ENCODE measurements at regions of chr4 and their contacts with region 1.

Region 1: DNA sequence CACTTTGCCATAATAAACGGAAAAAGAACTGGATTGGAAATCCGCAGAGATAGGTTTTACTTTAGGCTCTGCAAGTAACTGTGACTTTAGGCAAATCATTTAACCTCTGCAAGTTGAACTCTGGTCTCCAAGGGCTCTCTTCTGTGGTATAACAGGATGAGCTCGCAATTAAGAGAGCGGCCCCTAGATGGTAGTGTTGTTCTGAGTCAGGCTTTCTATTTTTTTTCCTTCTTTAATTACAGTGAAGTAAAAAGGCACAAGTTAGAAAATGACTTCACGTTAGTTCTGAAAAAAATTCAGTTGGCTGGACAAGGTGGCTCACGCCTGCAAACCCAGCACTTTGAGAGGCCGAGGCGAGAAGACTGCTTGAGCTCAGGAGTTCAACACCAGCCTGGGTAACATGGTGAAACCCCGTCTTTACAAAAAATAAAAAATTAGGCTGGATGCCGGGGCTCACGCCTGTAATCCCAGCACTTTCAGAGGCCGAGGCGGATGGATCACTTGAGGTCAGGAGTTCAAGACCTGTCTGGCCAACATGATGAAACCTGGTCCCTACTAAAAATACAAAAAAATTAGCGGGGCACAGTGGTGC is 18.0 kb downstream of the RPS3A start:
- DNase-seq: peak; percentile 37
- ATAC-seq: peak; percentile 87
- H3K4me3 ChIP-seq: no peak overlapping the region
- H3K27ac ChIP-seq: no peak overlapping the region
- H3K4me1 ChIP-seq: no peaks in the 10 kb centered on the region
- H3K27me3 ChIP-seq: no peaks in the 10 kb centered on the region
- CTCF ChIP-seq: peak; percentile 69 to 82 (median 73); a peak in 5 of 6 replicates
- POLR2A ChIP-seq: no peak
- RAD21 ChIP-seq: peak; percentile 90

Region 2: GRCh38 chr4:151091081-151091480 is 26.4 kb before region 1 on chr4:
- CTCF ChIA-PET with region 1: no interaction called
- POLR2A ChIA-PET with region 1: no interaction called
- RAD21 ChIA-PET with region 1: no interaction called
- intact Hi-C with region 1: no loop called
- DNase-seq: no peak
- ATAC-seq: no peak
- H3K4me3 ChIP-seq: no peak overlapping the region
- H3K27ac ChIP-seq: no peak overlapping the region
- H3K4me1 ChIP-seq: no peaks in the 10 kb centered on the region
- H3K27me3 ChIP-seq: no peaks in the 10 kb centered on the region
- CTCF ChIP-seq: no peak
- POLR2A ChIP-seq: no peak
- RAD21 ChIP-seq: no peak

Region 3: GRCh38 chr4:151362404-151363164 is 245.1 kb after region 1 on chr4:
- CTCF ChIA-PET with region 1: interaction called, 8 read pairs
- POLR2A ChIA-PET with region 1: no interaction called
- RAD21 ChIA-PET with region 1: interaction called, 3 read pairs
- intact Hi-C with region 1: loop called (anchors 1 kb)
- DNase-seq: peak; percentile 76
- ATAC-seq: peak; percentile 99
- H3K4me3 ChIP-seq: no peak overlapping the region
- H3K27ac ChIP-seq: no peak overlapping the region
- H3K4me1 ChIP-seq: peaks cover 0 to 8% of the 10 kb centered on the region in 2 experiments; a peak in 2 of 4 replicates
- H3K27me3 ChIP-seq: no peaks in the 10 kb centered on the region
- CTCF ChIP-seq: peak; percentile 92 to 99 (median 98)
- POLR2A ChIP-seq: no peak
- RAD21 ChIP-seq: peak; percentile 98

Region 4: DNA sequence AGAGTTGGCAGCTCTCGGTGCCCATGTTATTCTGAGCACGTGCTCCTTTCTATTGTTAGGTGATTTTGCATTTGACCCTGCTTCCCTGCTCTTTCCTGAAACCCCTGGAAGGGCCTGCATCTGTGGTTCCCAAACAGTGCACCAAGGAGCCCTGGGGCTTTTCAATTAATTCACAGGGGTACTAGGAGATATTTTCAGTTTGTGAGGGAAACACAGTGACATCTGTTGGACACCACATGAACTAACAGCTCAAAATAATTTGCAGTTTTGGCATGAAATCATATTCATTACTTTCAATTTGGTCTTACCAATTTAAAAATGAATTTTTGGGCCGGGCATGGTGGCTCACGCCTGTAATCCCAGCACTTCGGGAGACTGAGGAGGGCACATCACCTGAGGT is 486.8 kb after region 1 on chr4:
- CTCF ChIA-PET with region 1: interaction called, 16 read pairs
- POLR2A ChIA-PET with region 1: no interaction called
- RAD21 ChIA-PET with region 1: no interaction called
- intact Hi-C with region 1: loop called (anchors 2 kb)
- DNase-seq: no peak
- ATAC-seq: peak; percentile 70
- H3K4me3 ChIP-seq: no peak overlapping the region
- H3K27ac ChIP-seq: no peak overlapping the region
- H3K4me1 ChIP-seq: peaks cover 0 to 3% of the 10 kb centered on the region in 2 experiments; a peak in 1 of 4 replicates
- H3K27me3 ChIP-seq: no peaks in the 10 kb centered on the region
- CTCF ChIP-seq: peak; percentile 40 to 62 (median 45); a peak in 4 of 6 replicates
- POLR2A ChIP-seq: no peak
- RAD21 ChIP-seq: peak; percentile 57; the same call in 1 of the 2 replicates

Region 5: GRCh38 chr4:151613290-151613689 is 495.8 kb after region 1 on chr4:
- CTCF ChIA-PET with region 1: interaction called, 4 read pairs
- POLR2A ChIA-PET with region 1: no interaction called
- RAD21 ChIA-PET with region 1: no interaction called
- intact Hi-C with region 1: loop called (anchors 2 kb)
- DNase-seq: no peak
- ATAC-seq: no peak
- H3K4me3 ChIP-seq: no peak overlapping the region
- H3K27ac ChIP-seq: no peak overlapping the region
- H3K4me1 ChIP-seq: no peaks in the 10 kb centered on the region
- H3K27me3 ChIP-seq: no peaks in the 10 kb centered on the region
- CTCF ChIP-seq: no peak
- POLR2A ChIP-seq: no peak
- RAD21 ChIP-seq: no peak

Region 6: GRCh38 chr4:151644622-151645021 is 527.2 kb after region 1 on chr4:
- CTCF ChIA-PET with region 1: interaction called, 12 read pairs
- POLR2A ChIA-PET with region 1: no interaction called
- RAD21 ChIA-PET with region 1: no interaction called
- intact Hi-C with region 1: no loop called
- DNase-seq: peak; percentile 10
- ATAC-seq: peak; percentile 94
- H3K4me3 ChIP-seq: no peak overlapping the region
- H3K27ac ChIP-seq: no peak overlapping the region
- H3K4me1 ChIP-seq: peaks cover 0 to 4% of the 10 kb centered on the region in 2 experiments; a peak in 1 of 4 replicates
- H3K27me3 ChIP-seq: no peaks in the 10 kb centered on the region
- CTCF ChIP-seq: peak; percentile 47 to 88 (median 88); a peak in 5 of 6 replicates
- POLR2A ChIP-seq: no peak
- RAD21 ChIP-seq: peak; percentile 63

Region 7: GRCh38 chr4:151760712-151761527 is 643.5 kb after region 1 on chr4 and contains the start of gene GATB:
- CTCF ChIA-PET with region 1: no interaction called
- POLR2A ChIA-PET with region 1: no interaction called
- RAD21 ChIA-PET with region 1: no interaction called
- intact Hi-C with region 1: loop called (anchors 10 kb)
- DNase-seq: peak; percentile 96
- ATAC-seq: peak; percentile 98
- H3K4me3 ChIP-seq: peak within 1 kb of the TSS; percentile 87 to 96
- H3K27ac ChIP-seq: peak within 1 kb of the TSS; percentile 48
- H3K4me1 ChIP-seq: peaks cover 7 to 13% of the 10 kb centered on the region in 2 experiments; a peak in 3 of 4 replicates
- H3K27me3 ChIP-seq: no peaks in the 10 kb centered on the region
- CTCF ChIP-seq: peak in 2 of 3 experiments; percentile 38 to 53; a peak in 3 of 6 replicates
- POLR2A ChIP-seq: peak; percentile 51
- RAD21 ChIP-seq: 0 out of 2 replicates have a peak, but pooled peaks have one; percentile 29
- total RNA-seq, gene GATB: 29.3 TPM

Region 8: DNA sequence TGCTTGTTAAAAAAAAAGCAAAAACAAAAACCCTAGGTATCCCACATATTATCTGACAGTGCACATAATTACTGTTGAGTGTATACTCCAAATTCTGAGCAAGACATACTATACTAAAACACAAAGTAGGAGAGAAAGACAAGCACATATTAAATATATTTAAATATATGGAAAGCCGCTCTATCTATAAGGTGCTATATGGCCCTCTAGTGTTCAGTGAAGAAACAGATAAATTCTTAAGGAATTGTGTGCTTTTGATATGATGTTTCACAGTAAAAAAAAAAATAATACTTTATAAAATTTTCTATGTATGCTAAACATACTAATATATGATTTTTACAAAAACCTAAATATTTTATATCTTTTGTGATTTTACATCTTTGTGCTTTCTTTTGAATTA is 1280.6 kb after region 1 on chr4:
- CTCF ChIA-PET with region 1: no interaction called
- POLR2A ChIA-PET with region 1: no interaction called
- RAD21 ChIA-PET with region 1: no interaction called
- intact Hi-C with region 1: loop called (anchors 10 kb)
- DNase-seq: no peak
- ATAC-seq: no peak
- H3K4me3 ChIP-seq: no peak overlapping the region
- H3K27ac ChIP-seq: no peak overlapping the region
- H3K4me1 ChIP-seq: no peaks in the 10 kb centered on the region
- H3K27me3 ChIP-seq: no peaks in the 10 kb centered on the region
- CTCF ChIP-seq: peak; percentile 29 to 40 (median 37); a peak in 4 of 6 replicates
- POLR2A ChIP-seq: no peak
- RAD21 ChIP-seq: peak; percentile 47

Measured in HCT116 (cell line).